ENCODE measurements at regions of chr17 and their contacts with region 1.

Region 1: GRCh38 chr17:16589097-16589969 is 20.3 kb upstream of the ZNF287 start:
- DNase-seq: peak; percentile 93
- ATAC-seq: peak; percentile 92
- H3K4me3 Mint-ChIP-seq: peak overlapping the region; percentile 54
- H3K27ac Mint-ChIP-seq: no peak overlapping the region
- H3K4me1 Mint-ChIP-seq: peaks cover 8% of the 10 kb centered on the region
- H3K27me3 Mint-ChIP-seq: peaks cover 49% of the 10 kb centered on the region

Region 2: GRCh38 chr17:16141685-16142084 is 447.6 kb before region 1 on chr17:
- CTCF ChIA-PET with region 1: no interaction called
- DNase-seq: no peak
- ATAC-seq: no peak
- H3K4me3 Mint-ChIP-seq: no peak overlapping the region
- H3K27ac Mint-ChIP-seq: no peak overlapping the region
- H3K4me1 Mint-ChIP-seq: no peaks in the 10 kb centered on the region
- H3K27me3 Mint-ChIP-seq: no peaks in the 10 kb centered on the region

Region 3: GRCh38 chr17:16537130-16537458 is 52.2 kb before region 1 on chr17:
- CTCF ChIA-PET with region 1: interaction called, 33 read pairs
- DNase-seq: no peak
- ATAC-seq: no peak
- H3K4me3 Mint-ChIP-seq: peak overlapping the region; percentile 98
- H3K27ac Mint-ChIP-seq: peak overlapping the region; percentile 97
- H3K4me1 Mint-ChIP-seq: peaks cover 20% of the 10 kb centered on the region
- H3K27me3 Mint-ChIP-seq: peaks cover 2% of the 10 kb centered on the region

Region 4: GRCh38 chr17:16568541-16569357 is 20.6 kb before region 1 on chr17 and contains the start of gene ZNF287:
- CTCF ChIA-PET with region 1: interaction called, 13 read pairs
- DNase-seq: peak; percentile 93
- ATAC-seq: peak; percentile 98
- H3K4me3 Mint-ChIP-seq: peak within 1 kb of the TSS; percentile 73
- H3K27ac Mint-ChIP-seq: peak within 1 kb of the TSS; percentile 70
- H3K4me1 Mint-ChIP-seq: peaks cover 13% of the 10 kb centered on the region
- H3K27me3 Mint-ChIP-seq: no peaks in the 10 kb centered on the region
- total RNA-seq, gene ZNF287: 4.8 to 7.9 TPM

Region 5: DNA sequence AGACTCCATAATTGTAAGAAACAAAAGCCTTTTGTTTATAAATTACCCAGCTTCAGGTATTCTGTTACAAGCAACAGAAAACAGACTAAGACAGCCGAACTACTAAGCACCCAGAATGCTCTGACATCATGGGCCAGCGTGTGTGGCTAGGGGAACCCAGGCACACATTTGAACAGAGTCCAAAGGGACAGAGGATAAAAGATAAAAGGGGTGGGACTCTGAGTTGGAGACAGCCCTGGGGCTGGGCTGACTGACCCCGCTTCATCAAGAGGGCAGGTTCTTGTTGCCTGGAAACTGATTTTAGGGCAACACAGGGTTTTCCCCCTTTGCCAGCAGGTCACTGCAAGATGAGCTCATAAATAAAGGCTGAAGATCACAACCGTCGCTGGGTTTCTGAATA is 10.2 kb after region 1 on chr17:
- CTCF ChIA-PET with region 1: interaction called, 11 read pairs
- DNase-seq: no peak
- ATAC-seq: no peak
- H3K4me3 Mint-ChIP-seq: no peak overlapping the region
- H3K27ac Mint-ChIP-seq: no peak overlapping the region
- H3K4me1 Mint-ChIP-seq: no peaks in the 10 kb centered on the region
- H3K27me3 Mint-ChIP-seq: peaks cover 2% of the 10 kb centered on the region

Measured in activated CD8-positive, alpha-beta memory T cell treated with anti-CD3 and anti-CD28 coated beads, Interleukin-2, amount 10 ng/mL, durations not matched to agents 7 days and 5 days (primary cell).